ENCODE measurements at regions of chr1 and their contacts with region 1.

Region 1: GRCh38 chr1:203702130-203702577 is 62.8 kb upstream of the LAX1 start:
- DNase-seq: peak; percentile 11
- H3K4me3 ChIP-seq: no peak overlapping the region
- H3K27ac ChIP-seq: no peak overlapping the region
- H3K27me3 ChIP-seq: no peaks in the 10 kb centered on the region
- CTCF ChIP-seq: peak; percentile 78

Region 2: DNA sequence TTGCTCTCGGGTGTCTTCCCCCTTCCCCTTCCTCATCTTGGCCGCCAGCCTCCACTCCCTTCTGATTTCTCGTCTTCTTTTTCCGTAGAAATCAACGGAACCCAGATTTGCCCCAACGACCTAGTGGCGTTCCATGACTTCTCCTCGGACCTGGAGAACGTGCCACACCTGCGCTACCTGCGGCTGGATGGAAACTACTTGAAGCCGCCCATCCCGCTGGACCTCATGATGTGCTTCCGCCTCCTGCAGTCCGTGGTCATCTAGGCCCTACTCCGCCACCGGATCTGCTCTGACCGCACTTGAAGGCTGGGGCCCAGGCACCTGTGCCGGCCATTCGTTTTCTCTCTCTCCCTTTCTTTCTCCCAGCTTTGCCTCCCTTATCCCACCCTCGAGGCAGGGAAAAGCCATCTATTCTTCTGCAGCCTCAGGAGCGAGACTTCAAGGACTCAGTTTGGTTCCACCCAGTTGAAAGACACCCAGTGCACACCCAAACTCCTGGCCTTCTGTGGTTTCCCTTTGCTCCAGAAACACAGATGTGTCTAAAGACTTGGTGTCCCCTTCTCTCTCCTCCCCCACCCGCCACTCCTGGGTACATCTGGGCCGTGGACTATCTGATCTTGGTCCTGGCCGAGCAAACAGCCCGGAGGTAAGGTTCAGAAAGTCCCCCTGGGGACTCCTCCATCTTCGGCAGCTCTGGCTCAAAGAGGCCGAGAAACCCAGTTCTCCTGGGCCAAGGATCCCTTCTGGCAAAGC is 215.4 kb before region 1 on chr1:
- CTCF ChIA-PET with region 1: interaction called, 18 read pairs
- POLR2A ChIA-PET with region 1: no interaction called
- DNase-seq: no peak
- H3K4me3 ChIP-seq: no peak overlapping the region
- H3K27ac ChIP-seq: peak overlapping the region; percentile 67
- H3K27me3 ChIP-seq: peaks cover 3% of the 10 kb centered on the region
- CTCF ChIP-seq: no peak

Region 3: GRCh38 chr1:203504397-203505250 is 197.5 kb before region 1 on chr1:
- CTCF ChIA-PET with region 1: interaction called, 185 read pairs
- POLR2A ChIA-PET with region 1: interaction called, 3 read pairs
- DNase-seq: peak; percentile 61
- H3K4me3 ChIP-seq: no peak overlapping the region
- H3K27ac ChIP-seq: no peak overlapping the region
- H3K27me3 ChIP-seq: no peaks in the 10 kb centered on the region
- CTCF ChIP-seq: peak; percentile 81

Region 4: DNA sequence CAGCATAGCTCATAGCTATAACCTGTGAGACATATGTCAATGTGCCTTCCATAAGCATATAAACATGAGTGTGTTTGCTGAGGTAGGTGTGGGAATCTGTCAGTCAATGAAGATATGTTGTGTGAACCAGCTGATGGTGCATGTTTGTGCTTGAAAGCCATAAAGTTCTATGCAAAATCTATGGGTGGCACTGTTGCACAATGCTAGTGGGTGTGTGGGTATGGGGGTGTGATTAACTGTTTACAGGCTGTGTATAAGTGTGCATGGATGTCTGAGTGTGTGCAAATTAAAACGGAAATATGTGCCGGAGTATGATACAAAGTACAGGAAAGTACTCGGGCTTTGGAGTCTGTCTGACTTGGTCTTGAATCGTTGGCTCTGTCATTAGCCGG is 76.5 kb before region 1 on chr1:
- CTCF ChIA-PET with region 1: interaction called, 12 read pairs
- POLR2A ChIA-PET with region 1: interaction called, 3 read pairs
- DNase-seq: no peak
- H3K4me3 ChIP-seq: no peak overlapping the region
- H3K27ac ChIP-seq: no peak overlapping the region
- H3K27me3 ChIP-seq: no peaks in the 10 kb centered on the region
- CTCF ChIP-seq: no peak

Region 5: GRCh38 chr1:203686091-203686632 is 16.0 kb before region 1 on chr1:
- CTCF ChIA-PET with region 1: interaction called, 12 read pairs
- POLR2A ChIA-PET with region 1: no interaction called
- DNase-seq: no peak
- H3K4me3 ChIP-seq: no peak overlapping the region
- H3K27ac ChIP-seq: peak overlapping the region; percentile 47
- H3K27me3 ChIP-seq: no peaks in the 10 kb centered on the region
- CTCF ChIP-seq: no peak

Region 6: GRCh38 chr1:203726417-203726867 is 24.3 kb after region 1 on chr1:
- CTCF ChIA-PET with region 1: interaction called, 12 read pairs
- POLR2A ChIA-PET with region 1: no interaction called
- DNase-seq: no peak
- H3K4me3 ChIP-seq: no peak overlapping the region
- H3K27ac ChIP-seq: no peak overlapping the region
- H3K27me3 ChIP-seq: no peaks in the 10 kb centered on the region
- CTCF ChIP-seq: no peak

Measured in AG04450 (cell line).